GM10248 (cell line): ENCODE measurements at regions of chr10 and their contacts with region 1.

Region 1: GRCh38 chr10:117442944-117443685 is 67.9 kb upstream of the PDZD8 start:
- DNase-seq: peak; percentile 82
- CTCF ChIP-seq: peak; percentile 79

Region 2: DNA sequence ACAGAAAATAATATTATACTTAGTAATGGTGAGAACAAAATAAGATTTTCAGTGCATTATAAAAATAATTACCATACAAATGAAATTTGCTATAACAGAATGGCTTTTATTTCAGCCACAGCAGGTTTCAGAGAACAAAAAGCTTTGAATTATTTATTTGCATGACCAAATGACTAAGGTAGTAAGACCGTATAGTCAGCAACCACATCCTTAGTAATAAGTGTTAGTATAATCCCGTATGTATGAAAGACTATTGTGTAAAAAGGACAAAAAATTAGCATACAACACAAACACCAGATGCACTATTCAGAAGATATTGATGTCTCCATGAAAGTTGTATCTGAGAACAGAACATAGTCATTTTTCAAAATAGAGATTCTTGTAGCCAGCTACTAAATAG is 80.1 kb before region 1 on chr10:
- CTCF ChIA-PET with region 1: no interaction called
- POLR2A ChIA-PET with region 1: no interaction called
- DNase-seq: no peak
- CTCF ChIP-seq: no peak

Region 3: GRCh38 chr10:117419921-117420320 is 23.2 kb before region 1 on chr10:
- CTCF ChIA-PET with region 1: interaction called, 12 read pairs
- POLR2A ChIA-PET with region 1: no interaction called
- DNase-seq: no peak
- CTCF ChIP-seq: no peak

Region 4: GRCh38 chr10:117425974-117426566 is 17.0 kb before region 1 on chr10:
- CTCF ChIA-PET with region 1: interaction called, 33 read pairs
- POLR2A ChIA-PET with region 1: interaction called, 6 read pairs
- DNase-seq: peak; percentile 41
- CTCF ChIP-seq: no peak

Region 5: GRCh38 chr10:117431160-117431559 is 12.0 kb before region 1 on chr10:
- CTCF ChIA-PET with region 1: interaction called, 33 read pairs
- POLR2A ChIA-PET with region 1: interaction called, 6 read pairs
- DNase-seq: no peak
- CTCF ChIP-seq: no peak

Region 6: GRCh38 chr10:117461766-117462423 is 18.8 kb after region 1 on chr10:
- CTCF ChIA-PET with region 1: interaction called, 13 read pairs
- POLR2A ChIA-PET with region 1: no interaction called
- DNase-seq: no peak
- CTCF ChIP-seq: no peak

Region 7: GRCh38 chr10:117920956-117921355 is 477.8 kb after region 1 on chr10:
- CTCF ChIA-PET with region 1: no interaction called
- POLR2A ChIA-PET with region 1: no interaction called
- DNase-seq: no peak
- CTCF ChIP-seq: no peak

Region 8: DNA sequence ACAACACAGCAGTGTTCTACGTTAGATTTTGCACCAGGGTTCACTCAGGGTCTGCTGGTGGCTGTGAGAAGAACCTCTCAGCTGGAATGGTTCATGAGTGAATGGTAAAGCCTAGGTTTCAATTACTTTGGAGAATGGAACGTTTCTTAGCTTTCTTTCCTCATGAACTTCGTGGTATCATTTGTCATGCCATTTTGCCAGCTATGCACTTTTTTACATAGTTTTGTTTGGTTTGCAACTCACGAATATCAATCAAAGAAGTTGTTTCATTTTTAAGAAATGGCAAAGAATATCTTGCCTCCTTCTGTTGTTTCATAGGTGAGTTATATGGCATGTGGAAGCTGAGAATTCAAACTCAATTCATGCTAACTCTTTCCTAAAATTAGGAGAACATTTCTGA is 637.7 kb after region 1 on chr10:
- CTCF ChIA-PET with region 1: no interaction called
- POLR2A ChIA-PET with region 1: no interaction called
- DNase-seq: no peak
- CTCF ChIP-seq: no peak

Region 9: DNA sequence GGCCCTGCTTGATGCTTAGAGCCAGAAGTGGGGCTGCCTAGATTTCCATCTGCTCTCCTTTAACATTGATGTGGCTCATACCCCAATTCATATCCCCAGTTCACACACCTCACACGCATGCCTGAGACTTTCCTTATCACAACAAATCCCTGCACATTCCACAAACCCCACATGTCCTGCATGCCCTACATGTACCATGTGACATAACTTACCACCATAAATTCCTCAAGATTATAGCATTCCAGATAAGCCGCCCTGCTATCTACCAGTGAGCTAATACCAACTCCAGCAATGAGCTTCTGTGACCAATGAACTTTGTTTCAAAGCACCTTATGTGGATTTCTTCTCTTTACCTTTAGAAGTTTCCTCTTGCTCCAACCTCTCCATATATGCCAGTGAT is 708.3 kb after region 1 on chr10:
- CTCF ChIA-PET with region 1: no interaction called
- POLR2A ChIA-PET with region 1: no interaction called
- DNase-seq: no peak
- CTCF ChIP-seq: no peak

Region 10: DNA sequence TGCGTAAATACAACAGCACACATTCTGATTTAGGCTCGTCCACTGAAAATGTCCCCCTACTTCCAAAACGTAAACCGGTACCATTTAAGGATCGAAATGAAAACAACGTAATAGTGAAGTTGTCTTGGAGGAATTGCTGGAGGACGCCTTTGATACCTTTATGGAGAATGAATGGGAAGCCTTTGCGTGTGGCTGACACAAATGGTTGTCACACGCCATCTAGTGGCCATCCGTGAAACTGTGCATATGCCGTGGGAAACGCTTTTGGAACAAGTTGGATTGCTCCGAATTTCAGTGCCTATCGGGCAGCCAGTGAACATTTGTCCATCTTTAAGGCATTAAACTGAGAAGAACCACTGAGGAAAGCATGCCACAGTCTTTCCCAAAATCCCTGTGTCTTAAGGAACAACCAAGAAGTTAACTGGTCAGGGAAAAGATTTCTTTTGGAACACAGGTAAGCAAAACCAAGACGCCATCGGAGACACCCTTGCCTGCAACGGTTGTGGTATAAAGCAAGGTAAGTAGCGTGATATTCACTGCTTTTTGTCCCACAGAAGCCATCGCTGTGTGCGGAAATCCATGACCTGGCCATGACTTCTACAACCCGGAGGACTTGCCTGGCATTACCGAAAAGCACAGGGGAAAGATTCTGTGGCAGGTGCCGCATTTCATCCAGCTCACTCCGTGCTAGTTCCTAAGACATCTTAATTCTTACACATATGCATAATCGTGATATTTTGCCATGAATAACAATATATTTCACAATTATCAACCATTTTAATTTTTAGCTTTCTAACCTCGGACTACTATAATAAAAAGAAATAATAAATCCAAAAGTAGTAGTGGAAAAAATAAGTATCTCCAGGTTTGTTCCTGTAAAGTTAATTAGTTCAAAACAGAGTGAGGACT is 798.4 kb after region 1 on chr10:
- CTCF ChIA-PET with region 1: interaction called, 16 read pairs
- POLR2A ChIA-PET with region 1: no interaction called
- DNase-seq: peak; percentile 50
- CTCF ChIP-seq: peak; percentile 94